CD4-positive, alpha-beta memory T cell (primary cell): ENCODE measurements at regions of chr19 and their contacts with region 1.

Region 1: DNA sequence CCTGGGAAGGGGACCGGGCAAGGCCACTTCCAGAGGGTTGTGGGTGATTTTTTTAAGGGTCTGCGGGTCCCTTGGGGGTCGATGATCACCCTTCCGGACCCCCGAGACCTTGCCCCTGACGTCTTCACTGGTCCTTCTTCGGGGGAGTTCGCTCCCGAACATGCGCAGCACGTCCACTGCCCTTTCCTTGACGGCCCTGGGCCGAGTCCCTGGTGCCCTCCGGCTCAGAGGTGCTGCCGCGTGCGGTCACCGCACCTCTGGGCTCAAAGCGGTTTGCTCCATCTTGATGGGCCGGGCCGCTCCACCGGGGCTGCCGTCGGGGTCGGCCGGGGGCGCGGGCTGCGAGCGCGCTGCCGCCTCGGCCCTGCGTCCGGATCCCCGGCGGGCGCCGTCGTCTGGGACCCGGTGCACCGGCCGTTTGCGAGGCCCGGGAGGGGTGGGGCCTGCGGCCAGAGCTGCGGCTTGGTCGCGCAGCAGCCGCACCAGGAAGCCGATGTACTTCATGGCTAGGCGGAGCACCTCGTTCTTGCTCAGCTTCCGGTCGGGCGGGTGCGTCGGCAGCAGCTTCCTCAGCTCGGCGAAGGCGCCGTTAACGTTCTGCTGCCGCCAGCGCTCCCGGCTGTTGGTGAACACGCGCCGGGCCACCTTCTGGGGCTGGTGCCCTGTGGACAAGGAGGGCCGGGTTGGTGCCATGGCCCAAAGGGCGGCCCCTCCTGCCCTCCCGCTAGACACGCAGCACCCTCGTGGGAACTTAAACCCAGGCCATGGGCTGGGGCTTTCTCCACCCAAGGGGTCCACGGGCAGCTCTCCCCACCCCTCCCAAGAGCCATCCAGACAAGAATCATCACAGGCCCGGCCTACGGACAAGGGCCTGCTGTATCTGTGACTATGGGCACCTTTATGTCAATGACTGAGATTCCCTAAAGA is 3.3 kb downstream of the LYL1 start:
- DNase-seq: peak; percentile 82 to 88 (median 84)
- H3K4me3 ChIP-seq: peak overlapping the region; percentile 58 to 70
- H3K4me3 Mint-ChIP-seq: peak overlapping the region; percentile 84 to 92 (median 87)
- H3K27ac ChIP-seq: peak overlapping the region; percentile 78
- H3K27ac Mint-ChIP-seq: peak overlapping the region; percentile 84 to 99 (median 97)
- H3K4me1 ChIP-seq: peaks cover 87% of the 10 kb centered on the region
- H3K4me1 Mint-ChIP-seq: peaks cover 29 to 81% (median 48%) of the 10 kb centered on the region in 4 donors
- H3K27me3 ChIP-seq: peaks cover 15% of the 10 kb centered on the region
- H3K27me3 Mint-ChIP-seq: peaks cover 5 to 10% of the 10 kb centered on the region in 2 donors

Region 2: GRCh38 chr19:12890787-12891552 is 208.4 kb before region 1 on chr19 and contains the start of gene GCDH:
- CTCF ChIA-PET with region 1: no interaction called
- POLR2A ChIA-PET with region 1: interaction called, 12 read pairs
- intact Hi-C with region 1: loop called (anchors 5 kb)
- DNase-seq: peak; percentile 96 to 99 (median 97)
- H3K4me3 ChIP-seq: peak within 1 kb of the TSS; percentile 84 to 88
- H3K4me3 Mint-ChIP-seq: peak within 1 kb of the TSS; percentile 97 to 99 (median 99)
- H3K27ac ChIP-seq: peak within 1 kb of the TSS; percentile 69
- H3K27ac Mint-ChIP-seq: peak within 1 kb of the TSS; percentile 93 to 99 (median 97)
- H3K4me1 ChIP-seq: peaks cover 22% of the 10 kb centered on the region
- H3K4me1 Mint-ChIP-seq: peaks cover 14 to 37% (median 25%) of the 10 kb centered on the region in 4 donors
- H3K27me3 ChIP-seq: no peaks in the 10 kb centered on the region
- H3K27me3 Mint-ChIP-seq: no peaks in the 10 kb centered on the region
- total RNA-seq, gene GCDH: 63.9 to 66.1 TPM

Region 3: DNA sequence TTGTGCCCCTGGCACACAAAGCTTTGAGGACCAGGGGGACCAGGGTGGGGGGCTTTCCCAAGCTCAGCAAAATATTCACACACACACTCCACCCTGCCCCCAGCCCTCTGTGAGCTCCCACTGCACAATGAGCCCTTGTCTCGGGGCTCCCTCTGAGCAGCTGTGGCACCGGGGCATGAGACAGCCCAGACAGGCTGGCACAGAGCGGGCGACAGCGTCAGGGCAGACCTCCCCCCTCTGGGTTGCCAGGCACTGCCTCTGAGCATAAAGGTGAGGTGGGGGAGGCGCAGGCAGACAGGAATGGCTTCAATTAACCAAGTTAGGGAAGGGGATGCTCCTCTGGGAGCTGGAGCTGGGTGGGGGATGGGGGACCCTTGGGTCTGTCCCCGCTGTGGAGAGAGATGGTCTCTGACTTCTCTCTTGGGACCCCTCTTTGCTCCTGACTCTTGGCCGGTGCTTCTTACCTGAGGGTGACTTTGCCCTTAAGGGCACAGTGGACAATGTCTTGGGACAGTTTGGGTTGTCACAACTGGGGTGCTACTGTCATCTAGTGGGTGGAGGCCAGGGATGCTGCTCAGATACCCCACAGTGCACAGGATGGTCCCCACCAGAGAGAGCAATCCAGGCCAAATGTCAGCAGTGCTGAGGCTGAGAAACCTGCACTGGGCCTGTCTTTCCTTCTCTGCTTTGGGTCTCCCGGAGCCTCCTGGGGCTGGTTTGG is 27.0 kb before region 1 on chr19:
- CTCF ChIA-PET with region 1: no interaction called
- POLR2A ChIA-PET with region 1: no interaction called
- intact Hi-C with region 1: no loop called
- DNase-seq: no peak
- H3K4me3 ChIP-seq: no peak overlapping the region
- H3K4me3 Mint-ChIP-seq: no peak overlapping the region
- H3K27ac ChIP-seq: no peak overlapping the region
- H3K27ac Mint-ChIP-seq: no peak overlapping the region
- H3K4me1 ChIP-seq: no peaks in the 10 kb centered on the region
- H3K4me1 Mint-ChIP-seq: no peaks in the 10 kb centered on the region
- H3K27me3 ChIP-seq: no peaks in the 10 kb centered on the region
- H3K27me3 Mint-ChIP-seq: peaks cover 0 to 1% of the 10 kb centered on the region in 2 donors

Region 4: DNA sequence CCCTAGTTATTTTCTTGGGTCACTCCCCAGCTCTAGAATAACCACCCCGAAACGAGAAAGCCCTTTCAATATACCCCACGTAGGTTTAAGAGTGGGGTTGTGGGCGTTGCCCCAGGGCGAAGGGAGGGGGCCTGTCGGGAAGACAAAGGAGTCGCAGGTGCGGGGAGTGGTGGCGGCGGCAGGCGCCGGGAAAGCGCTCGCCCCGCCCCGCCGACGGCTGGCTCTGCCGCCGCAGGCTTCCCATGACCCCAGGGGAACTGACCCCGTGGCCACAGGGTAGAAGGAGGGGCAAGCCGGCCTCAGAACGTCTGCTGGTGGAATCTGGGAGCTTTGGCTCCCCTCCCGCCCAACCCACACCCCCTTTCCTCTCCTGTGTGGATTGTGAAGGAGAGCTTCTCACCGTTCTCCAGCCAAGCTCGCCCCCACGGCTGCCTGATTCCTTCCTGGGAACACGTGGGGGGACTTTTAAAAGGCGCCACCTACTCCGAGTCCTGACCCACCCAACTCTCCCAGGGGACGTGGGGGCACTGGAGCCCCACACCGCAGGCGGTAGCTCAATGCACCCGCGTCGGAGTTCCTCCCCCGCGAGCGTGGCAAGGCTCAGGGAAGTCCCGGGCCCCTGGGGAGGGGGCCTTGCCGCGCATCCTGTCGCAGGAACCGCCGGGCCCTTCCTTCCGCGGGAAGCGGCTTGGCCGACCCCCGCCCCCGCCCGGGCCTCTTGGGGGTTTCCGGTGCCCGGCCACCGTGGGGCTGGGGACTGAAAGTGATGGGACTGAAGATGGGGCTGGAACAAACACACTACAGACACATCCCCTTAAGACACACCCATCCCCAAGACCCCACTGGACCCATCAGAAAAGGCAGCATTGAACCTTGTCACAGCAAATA is 56.4 kb after region 1 on chr19:
- CTCF ChIA-PET with region 1: interaction called, 5 read pairs
- POLR2A ChIA-PET with region 1: interaction called, 39 read pairs
- intact Hi-C with region 1: loop called (anchors 1 kb)
- DNase-seq: peak; percentile 80 to 89 (median 83)
- H3K4me3 ChIP-seq: peak overlapping the region; percentile 98 to 100
- H3K4me3 Mint-ChIP-seq: peak overlapping the region; percentile 95 to 99 (median 99)
- H3K27ac ChIP-seq: peak overlapping the region; percentile 98
- H3K27ac Mint-ChIP-seq: peak overlapping the region; percentile 98 to 99 (median 99)
- H3K4me1 ChIP-seq: peaks cover 48% of the 10 kb centered on the region
- H3K4me1 Mint-ChIP-seq: peaks cover 27 to 77% (median 38%) of the 10 kb centered on the region in 4 donors
- H3K27me3 ChIP-seq: no peaks in the 10 kb centered on the region
- H3K27me3 Mint-ChIP-seq: peaks cover 0 to 3% of the 10 kb centered on the region in 2 donors